Calu3 (cell line): ENCODE measurements at regions of chr7 and their contacts with region 1.

Region 1: GRCh38 chr7:111486472-111487142 is 75.7 kb downstream of the IMMP2L start:
- DNase-seq: peak; percentile 27
- H3K4me3 Mint-ChIP-seq: no peak overlapping the region
- H3K27ac Mint-ChIP-seq: no peak overlapping the region
- H3K4me1 Mint-ChIP-seq: no peaks in the 10 kb centered on the region
- H3K27me3 Mint-ChIP-seq: no peaks in the 10 kb centered on the region
- CTCF ChIP-seq: peak; percentile 40

Region 2: GRCh38 chr7:111089822-111090426 is 396.7 kb before region 1 on chr7:
- CTCF ChIA-PET with region 1: no interaction called
- intact Hi-C with region 1: loop called (anchors 1 kb)
- DNase-seq: no peak
- H3K4me3 Mint-ChIP-seq: no peak overlapping the region
- H3K27ac Mint-ChIP-seq: no peak overlapping the region
- H3K4me1 Mint-ChIP-seq: no peaks in the 10 kb centered on the region
- H3K27me3 Mint-ChIP-seq: no peaks in the 10 kb centered on the region
- CTCF ChIP-seq: no peak

Region 3: DNA sequence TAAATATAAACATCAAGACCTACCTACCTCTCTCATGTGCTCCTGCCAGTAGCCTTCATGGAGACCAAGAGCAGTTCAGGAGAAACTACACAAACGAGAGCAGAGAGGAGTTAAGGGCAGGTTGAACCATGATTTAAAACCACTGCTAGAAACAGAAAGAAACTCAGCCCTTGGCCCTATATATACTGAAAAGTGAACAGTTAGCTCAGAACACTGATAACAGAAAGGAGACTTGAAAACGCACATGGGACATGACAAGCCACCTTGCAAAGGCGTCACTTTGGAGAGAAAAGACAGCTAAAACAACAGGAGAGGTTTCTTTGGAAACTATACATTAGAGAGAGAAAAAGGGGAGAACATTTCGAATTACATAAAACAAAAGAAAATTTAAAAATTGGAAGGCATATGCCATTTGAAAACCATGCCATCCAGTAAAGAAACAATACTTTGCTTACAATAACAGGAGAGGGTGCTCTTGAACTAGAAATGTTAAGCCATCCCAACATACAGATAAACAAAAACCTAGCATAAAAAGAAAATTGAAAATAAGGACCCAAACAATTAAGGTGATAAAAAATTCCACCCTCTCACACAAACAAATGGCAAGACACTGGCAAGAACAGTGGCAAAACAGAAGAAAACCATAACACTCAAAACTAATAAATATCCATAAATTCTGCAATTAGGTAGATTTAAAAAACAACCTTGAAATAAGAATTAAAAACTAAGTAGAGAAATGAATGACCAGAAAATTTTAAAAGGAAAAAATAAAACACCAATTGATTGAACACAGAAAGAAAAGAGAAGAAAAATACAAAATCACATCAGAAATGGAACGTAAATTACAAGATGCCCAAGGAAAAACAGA is 157.0 kb before region 1 on chr7:
- CTCF ChIA-PET with region 1: no interaction called
- intact Hi-C with region 1: loop called (anchors 5 kb)
- DNase-seq: no peak
- H3K4me3 Mint-ChIP-seq: no peak overlapping the region
- H3K27ac Mint-ChIP-seq: no peak overlapping the region
- H3K4me1 Mint-ChIP-seq: peaks cover 8% of the 10 kb centered on the region
- H3K27me3 Mint-ChIP-seq: no peaks in the 10 kb centered on the region
- CTCF ChIP-seq: no peak

Region 4: DNA sequence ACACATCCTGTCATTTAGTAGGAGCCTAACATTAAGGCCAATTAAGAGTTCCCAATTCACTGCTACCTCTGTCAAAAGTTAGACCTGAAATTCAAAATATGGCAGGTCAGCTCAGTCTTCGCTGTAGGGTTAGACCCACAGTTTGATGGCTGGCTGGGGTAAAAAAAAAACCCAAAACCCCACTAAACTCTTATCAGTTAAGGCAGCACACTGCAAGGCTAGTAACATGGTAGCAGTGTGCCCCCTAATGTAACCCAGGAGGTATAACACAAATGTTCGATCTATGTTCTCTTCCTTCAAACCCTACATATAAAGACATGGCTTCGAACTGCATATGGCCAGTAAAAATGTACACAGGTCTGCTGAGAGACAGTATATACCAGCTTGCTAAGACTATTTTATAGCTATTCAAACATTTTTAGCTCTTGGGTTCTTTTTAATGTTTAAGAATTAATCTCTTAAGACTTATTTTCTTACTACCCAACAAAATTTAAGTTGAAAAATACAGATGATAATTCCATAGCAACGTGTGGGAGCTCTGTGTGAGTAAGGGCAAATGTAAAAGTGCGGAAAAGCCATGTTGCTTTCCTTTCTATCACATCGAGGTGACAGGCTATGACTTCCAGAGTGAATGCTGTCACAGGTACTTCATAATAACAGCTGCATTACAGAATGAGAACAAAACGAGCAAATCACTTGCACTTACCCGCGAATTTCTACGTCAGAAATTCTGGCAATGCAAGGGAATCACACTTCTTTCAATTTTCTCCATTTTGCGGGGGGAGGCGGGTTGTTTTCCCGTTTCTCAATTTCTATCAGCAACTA is 244.1 kb after region 1 on chr7:
- CTCF ChIA-PET with region 1: no interaction called
- intact Hi-C with region 1: loop called (anchors 2 kb)
- DNase-seq: peak; percentile 23
- H3K4me3 Mint-ChIP-seq: no peak overlapping the region
- H3K27ac Mint-ChIP-seq: no peak overlapping the region
- H3K4me1 Mint-ChIP-seq: no peaks in the 10 kb centered on the region
- H3K27me3 Mint-ChIP-seq: no peaks in the 10 kb centered on the region
- CTCF ChIP-seq: no peak